Body of pancreas (tissue), 4 donors: ENCODE measurements at regions of chr13 and their contacts with region 1.

Region 1: DNA sequence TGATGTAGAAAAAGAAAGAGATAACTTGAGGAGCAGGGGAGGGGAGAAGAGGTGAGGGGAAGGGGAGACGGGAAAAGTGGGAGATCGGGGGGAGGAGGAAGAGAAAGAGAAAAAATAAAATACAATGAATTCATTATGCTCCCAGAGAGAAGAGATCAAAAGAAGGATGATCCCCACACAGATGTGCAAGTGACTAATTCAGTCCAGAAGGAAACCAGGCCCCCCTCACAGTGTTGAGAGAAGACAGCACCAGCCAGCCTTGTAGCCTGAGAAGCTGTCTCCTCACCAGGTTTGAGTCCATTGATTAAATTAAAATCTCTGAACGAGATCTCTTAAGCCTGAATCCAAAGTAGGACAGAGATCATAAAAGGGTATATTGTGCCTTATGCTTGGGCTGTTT is 333.7 kb upstream of the NBEA start:
- DNase-seq: no peak
- ATAC-seq: no peak
- H3K4me3 ChIP-seq: no peak overlapping the region
- H3K27ac ChIP-seq: no peak overlapping the region
- H3K4me1 ChIP-seq: no peaks in the 10 kb centered on the region
- H3K27me3 ChIP-seq: no peaks in the 10 kb centered on the region
- CTCF ChIP-seq: no peak
- POLR2A ChIP-seq: no peak

Region 2: GRCh38 chr13:34224877-34225276 is 383.5 kb before region 1 on chr13:
- intact Hi-C with region 1: loop called (anchors 5 kb)
- DNase-seq: peak in 2 of 4 donors; percentile 25 to 36
- ATAC-seq: no peak
- H3K4me3 ChIP-seq: no peak overlapping the region
- H3K27ac ChIP-seq: no peak overlapping the region
- H3K4me1 ChIP-seq: no peaks in the 10 kb centered on the region
- H3K27me3 ChIP-seq: no peaks in the 10 kb centered on the region
- CTCF ChIP-seq: no peak
- POLR2A ChIP-seq: no peak